ENCODE measurements at regions of chr1 and their contacts with region 1.

Region 1: DNA sequence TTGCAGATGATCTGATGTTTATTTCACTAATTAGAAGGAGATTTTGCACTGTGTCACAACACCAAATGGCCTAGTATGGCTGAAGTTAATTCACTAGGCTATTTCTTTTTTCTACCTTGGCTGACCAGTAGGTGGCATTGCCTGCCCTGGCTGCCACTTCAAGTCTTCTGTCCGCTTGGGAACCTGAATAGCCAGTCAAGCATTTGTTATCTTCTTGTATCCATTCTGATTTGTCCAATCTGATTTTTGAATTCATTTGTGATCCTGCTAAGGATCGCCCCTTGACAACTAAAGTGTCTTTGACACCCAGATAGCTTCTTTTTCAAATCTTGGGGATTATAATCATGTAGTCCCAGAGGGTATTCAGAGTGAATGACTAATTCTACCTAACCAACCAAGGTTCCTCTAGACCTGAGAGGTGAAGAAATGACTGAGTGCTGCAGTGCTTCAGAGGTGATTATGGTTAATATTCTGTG is 99.4 kb downstream of the GIPC2 start:
- DNase-seq: peak; percentile 62
- H3K4me3 ChIP-seq: no peak overlapping the region
- H3K27ac ChIP-seq: no peak overlapping the region
- H3K4me1 ChIP-seq: no peaks in the 10 kb centered on the region
- H3K27me3 ChIP-seq: no peaks in the 10 kb centered on the region
- CTCF ChIP-seq: peak; percentile 76 to 81
- POLR2A ChIP-seq: no peak

Region 2: GRCh38 chr1:77948841-77949424 is 196.2 kb before region 1 on chr1:
- CTCF ChIA-PET with region 1: no interaction called
- POLR2A ChIA-PET with region 1: no interaction called
- dilution Hi-C with region 1: no loop called
- intact Hi-C with region 1: no loop called
- DNase-seq: peak; percentile 74
- H3K4me3 ChIP-seq: peak overlapping the region in 1 of 3 experiments; percentile 28
- H3K27ac ChIP-seq: peak overlapping the region; percentile 18
- H3K4me1 ChIP-seq: peaks cover 15% of the 10 kb centered on the region
- H3K27me3 ChIP-seq: no peaks in the 10 kb centered on the region
- CTCF ChIP-seq: peak; percentile 18 to 30
- POLR2A ChIP-seq: peak; percentile 34

Region 3: GRCh38 chr1:78132174-78132947 is 12.8 kb before region 1 on chr1:
- CTCF ChIA-PET with region 1: interaction called, 12 read pairs
- POLR2A ChIA-PET with region 1: no interaction called
- dilution Hi-C with region 1: no loop called
- intact Hi-C with region 1: no loop called
- DNase-seq: no peak
- H3K4me3 ChIP-seq: no peak overlapping the region
- H3K27ac ChIP-seq: no peak overlapping the region
- H3K4me1 ChIP-seq: no peaks in the 10 kb centered on the region
- H3K27me3 ChIP-seq: no peaks in the 10 kb centered on the region
- CTCF ChIP-seq: no peak
- POLR2A ChIP-seq: no peak

Region 4: DNA sequence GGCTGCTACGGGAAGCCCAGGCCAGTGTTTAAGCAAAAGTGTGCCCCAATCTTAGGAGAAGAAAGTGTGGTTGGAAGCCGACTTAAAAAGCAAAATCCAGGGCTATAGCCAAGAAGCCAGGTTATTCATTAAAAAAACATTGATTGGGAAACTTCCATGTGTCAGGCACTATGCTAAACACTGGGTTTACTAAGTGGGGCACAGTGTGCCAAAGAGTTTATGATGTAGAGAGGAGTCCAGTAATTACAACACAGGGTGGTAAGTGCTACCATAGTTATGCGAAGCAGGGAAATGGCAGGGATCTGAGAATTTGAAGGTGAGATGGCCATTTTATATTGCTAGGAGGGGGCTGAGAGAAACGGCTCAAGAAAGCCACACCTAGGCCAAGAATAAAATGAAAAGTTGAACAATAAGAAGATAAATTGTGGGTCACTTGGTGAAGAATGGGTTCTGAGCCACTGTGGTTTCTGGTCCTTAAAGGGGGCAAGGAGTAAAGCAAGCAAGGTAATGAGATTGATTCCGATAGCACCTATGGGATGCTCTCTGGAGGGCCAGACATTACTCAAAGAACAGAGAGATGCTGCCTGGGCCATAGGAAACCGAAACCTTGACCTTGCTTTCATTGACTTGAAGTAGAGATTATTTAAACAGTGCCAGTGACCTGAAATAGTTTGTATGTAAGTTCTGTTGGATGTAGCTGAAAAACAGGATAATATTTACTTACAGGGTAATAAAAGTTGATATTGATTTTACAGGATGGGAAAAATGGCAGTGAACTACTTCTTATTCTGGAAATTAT is 78.5 kb after region 1 on chr1:
- CTCF ChIA-PET with region 1: no interaction called
- POLR2A ChIA-PET with region 1: no interaction called
- dilution Hi-C with region 1: no loop called
- intact Hi-C with region 1: no loop called
- DNase-seq: no peak
- H3K4me3 ChIP-seq: no peak overlapping the region
- H3K27ac ChIP-seq: no peak overlapping the region
- H3K4me1 ChIP-seq: no peaks in the 10 kb centered on the region
- H3K27me3 ChIP-seq: peaks cover 3 to 10% of the 10 kb centered on the region in 2 experiments
- CTCF ChIP-seq: no peak
- POLR2A ChIP-seq: no peak

Region 5: GRCh38 chr1:78333502-78333901 is 188.4 kb after region 1 on chr1:
- CTCF ChIA-PET with region 1: interaction called, 3 read pairs
- POLR2A ChIA-PET with region 1: no interaction called
- dilution Hi-C with region 1: no loop called
- intact Hi-C with region 1: loop called (anchors 10 kb)
- DNase-seq: peak; percentile 25
- H3K4me3 ChIP-seq: no peak overlapping the region
- H3K27ac ChIP-seq: no peak overlapping the region
- H3K4me1 ChIP-seq: no peaks in the 10 kb centered on the region
- H3K27me3 ChIP-seq: no peaks in the 10 kb centered on the region
- CTCF ChIP-seq: peak; percentile 61 to 68
- POLR2A ChIP-seq: no peak

Region 6: GRCh38 chr1:78491451-78492071 is 346.4 kb after region 1 on chr1:
- CTCF ChIA-PET with region 1: interaction called, 3 read pairs
- POLR2A ChIA-PET with region 1: no interaction called
- dilution Hi-C with region 1: no loop called
- intact Hi-C with region 1: loop called (anchors 10 kb)
- DNase-seq: peak; percentile 45
- H3K4me3 ChIP-seq: peak overlapping the region; percentile 25 to 80 (median 34)
- H3K27ac ChIP-seq: no peak overlapping the region
- H3K4me1 ChIP-seq: peaks cover 4% of the 10 kb centered on the region
- H3K27me3 ChIP-seq: peaks cover 7 to 24% of the 10 kb centered on the region in 2 experiments
- CTCF ChIP-seq: no peak
- POLR2A ChIP-seq: no peak

Region 7: GRCh38 chr1:78570539-78570938 is 425.4 kb after region 1 on chr1:
- CTCF ChIA-PET with region 1: no interaction called
- POLR2A ChIA-PET with region 1: no interaction called
- dilution Hi-C with region 1: no loop called
- intact Hi-C with region 1: loop called (anchors 1 kb)
- DNase-seq: no peak
- H3K4me3 ChIP-seq: no peak overlapping the region
- H3K27ac ChIP-seq: no peak overlapping the region
- H3K4me1 ChIP-seq: no peaks in the 10 kb centered on the region
- H3K27me3 ChIP-seq: no peaks in the 10 kb centered on the region
- CTCF ChIP-seq: peak in 1 of 2 donors; percentile 4
- POLR2A ChIP-seq: no peak

Region 8: GRCh38 chr1:78607334-78607927 is 462.3 kb after region 1 on chr1:
- CTCF ChIA-PET with region 1: interaction called, 105 read pairs
- POLR2A ChIA-PET with region 1: no interaction called
- dilution Hi-C with region 1: no loop called
- intact Hi-C with region 1: loop called (anchors 1 kb)
- DNase-seq: peak; percentile 39
- H3K4me3 ChIP-seq: no peak overlapping the region
- H3K27ac ChIP-seq: no peak overlapping the region
- H3K4me1 ChIP-seq: no peaks in the 10 kb centered on the region
- H3K27me3 ChIP-seq: peaks cover 0 to 2% of the 10 kb centered on the region in 2 experiments
- CTCF ChIP-seq: peak; percentile 26 to 37
- POLR2A ChIP-seq: no peak

Region 9: DNA sequence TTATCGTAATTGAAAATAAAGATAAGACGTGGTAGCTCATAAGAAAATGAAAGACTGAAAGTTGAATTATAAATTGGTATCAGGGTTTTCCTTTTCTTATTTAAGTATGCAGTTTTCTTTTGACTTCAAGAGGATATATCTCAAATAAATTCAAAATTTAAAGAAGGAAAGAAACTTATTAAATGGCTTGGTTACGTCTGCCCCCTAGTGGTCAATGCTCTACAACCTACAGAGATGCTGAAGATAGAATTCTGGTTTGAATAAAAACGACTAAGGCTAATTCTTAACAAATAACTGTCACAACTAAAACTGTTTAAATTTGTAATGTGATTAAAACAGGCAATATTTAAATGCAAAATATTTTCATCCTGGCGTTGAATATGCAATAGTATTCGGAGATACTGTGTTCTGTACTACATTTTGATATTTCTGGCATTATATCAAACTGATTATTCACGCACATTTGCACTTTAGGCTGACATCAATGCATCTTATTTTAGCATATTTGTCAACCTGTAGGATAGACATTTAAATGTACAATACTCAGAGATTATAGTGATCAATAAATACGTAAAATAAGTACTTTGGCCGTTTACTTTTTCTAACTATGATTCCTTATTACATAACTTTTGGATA is 531.3 kb after region 1 on chr1:
- CTCF ChIA-PET with region 1: no interaction called
- POLR2A ChIA-PET with region 1: no interaction called
- dilution Hi-C with region 1: no loop called
- intact Hi-C with region 1: loop called (anchors 1 kb)
- DNase-seq: peak; percentile 70
- H3K4me3 ChIP-seq: no peak overlapping the region
- H3K27ac ChIP-seq: no peak overlapping the region
- H3K4me1 ChIP-seq: no peaks in the 10 kb centered on the region
- H3K27me3 ChIP-seq: peaks cover 0 to 3% of the 10 kb centered on the region in 2 experiments
- CTCF ChIP-seq: peak; percentile 55 to 58
- POLR2A ChIP-seq: no peak